ENCODE measurements at regions of chr19 and their contacts with region 1.

Region 1: DNA sequence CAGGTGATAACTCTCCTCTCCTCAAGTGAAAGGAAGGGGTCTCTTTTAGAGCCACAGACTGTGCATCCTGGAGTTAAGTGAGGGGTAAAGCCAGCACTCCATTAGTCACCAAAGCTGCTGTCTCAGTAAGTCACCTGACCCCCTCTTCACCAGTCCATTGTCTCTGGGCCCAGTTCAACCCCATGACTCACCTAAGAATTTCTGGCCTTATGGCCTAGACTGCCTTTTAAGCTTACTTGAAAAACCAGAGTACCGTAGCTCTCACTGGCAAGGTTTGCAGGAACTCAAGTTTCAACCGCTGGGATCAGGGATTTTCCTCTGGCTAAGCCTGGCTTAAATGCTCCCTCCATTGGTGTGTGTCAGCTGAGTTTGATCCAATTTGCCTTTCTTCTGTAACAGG is 23.4 kb upstream of the EID2 start:
- DNase-seq: no peak
- H3K4me3 ChIP-seq: no peak overlapping the region
- H3K27ac ChIP-seq: no peak overlapping the region
- H3K4me1 ChIP-seq: no peaks in the 10 kb centered on the region
- H3K27me3 ChIP-seq: no peaks in the 10 kb centered on the region
- CTCF ChIP-seq: no peak

Region 2: GRCh38 chr19:39655613-39656012 is 92.2 kb after region 1 on chr19 and contains the start of gene LGALS16:
- dilution Hi-C with region 1: loop called (anchors 5 kb)
- DNase-seq: no peak
- H3K4me3 ChIP-seq: no peak within 1 kb of the TSS
- H3K27ac ChIP-seq: no peak within 1 kb of the TSS
- H3K4me1 ChIP-seq: no peaks in the 10 kb centered on the region
- H3K27me3 ChIP-seq: no peaks in the 10 kb centered on the region
- CTCF ChIP-seq: no peak
- polyA plus RNA-seq, gene LGALS16: not detected in 3 replicates